ENCODE measurements at regions of chr19 and their contacts with region 1.

Region 1: DNA sequence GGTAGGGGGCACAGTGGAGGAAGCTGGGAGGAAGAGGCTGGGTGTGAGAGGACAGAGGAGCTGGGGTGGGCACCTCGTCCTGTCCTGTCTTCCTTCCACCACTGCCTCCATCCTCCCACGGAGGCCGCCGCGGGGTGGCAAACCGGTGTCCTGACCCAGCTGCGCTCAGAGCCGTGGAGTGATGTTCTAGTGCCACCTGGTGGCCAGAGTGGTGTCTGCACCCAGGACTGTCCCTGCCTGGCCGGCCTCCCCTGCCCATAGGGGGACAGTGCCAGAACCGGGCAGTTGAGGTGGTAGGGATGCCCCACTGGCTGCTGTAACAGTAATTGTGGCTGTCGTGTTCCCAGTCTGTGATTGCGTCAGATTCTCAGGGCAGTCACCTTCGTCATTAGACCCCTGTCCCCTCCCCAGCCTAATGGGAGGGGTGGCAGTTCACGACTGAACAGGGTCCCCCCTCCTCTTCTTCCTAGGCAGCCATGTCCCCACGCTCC is 11.1 kb upstream of the ARRDC2 start:
- DNase-seq: peak; percentile 88
- ATAC-seq: peak; percentile 75 to 78

Region 2: GRCh38 chr19:17873786-17874757 is 122.8 kb before region 1 on chr19:
- intact Hi-C with region 1: loop called in 1 of 2 experiments (anchors 5 kb)
- DNase-seq: peak; percentile 43
- ATAC-seq: peak; percentile 36 to 62

Region 3: GRCh38 chr19:17938092-17938845 is 58.6 kb before region 1 on chr19:
- intact Hi-C with region 1: loop called (anchors 1 to 5 kb)
- DNase-seq: peak; percentile 81
- ATAC-seq: peak; percentile 81 to 89

Region 4: GRCh38 chr19:17947815-17948513 is 48.9 kb before region 1 on chr19:
- intact Hi-C with region 1: loop called in 1 of 2 experiments (anchors 2 kb)
- DNase-seq: peak; percentile 93
- ATAC-seq: peak; percentile 87 to 94

Region 5: GRCh38 chr19:18044825-18045304 is 48.0 kb after region 1 on chr19:
- intact Hi-C with region 1: no loop called
- DNase-seq: peak; percentile 69
- ATAC-seq: peak; percentile 70 to 74

Measured in left cardiac atrium (tissue), 4 donors.